ENCODE measurements at regions of chr1 and their contacts with region 1.

Region 1: DNA sequence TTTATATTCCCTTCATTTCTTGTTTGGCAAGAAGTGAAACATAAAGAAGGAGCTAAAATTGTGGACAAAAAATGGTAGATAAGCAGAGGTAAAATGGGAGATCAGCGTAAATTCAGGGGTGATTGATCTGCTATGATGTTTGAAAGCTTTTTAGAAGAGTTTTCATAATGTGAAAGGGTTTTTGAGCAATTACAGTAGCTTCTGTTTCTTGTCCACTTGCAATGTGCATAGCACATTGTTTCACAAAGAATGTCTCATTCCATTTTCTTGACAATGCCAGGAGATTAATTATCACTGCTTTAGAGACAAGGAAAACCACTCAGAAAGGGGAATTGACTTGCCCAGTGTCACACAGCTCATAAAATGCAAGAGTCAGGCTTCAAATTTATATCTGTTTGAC is 65.9 kb upstream of the PLPPR4 start:
- DNase-seq: no peak
- ATAC-seq: no peak

Region 2: GRCh38 chr1:99131546-99131945 is 66.8 kb before region 1 on chr1:
- intact Hi-C with region 1: no loop called
- DNase-seq: no peak
- ATAC-seq: no peak

Region 3: GRCh38 chr1:99264201-99265021 is 66.0 kb after region 1 on chr1 and contains the start of gene PLPPR4:
- intact Hi-C with region 1: loop called (anchors 10 kb)
- DNase-seq: peak; percentile 74
- ATAC-seq: peak; percentile 92
- total RNA-seq, gene PLPPR4: 0.24 TPM

Region 4: DNA sequence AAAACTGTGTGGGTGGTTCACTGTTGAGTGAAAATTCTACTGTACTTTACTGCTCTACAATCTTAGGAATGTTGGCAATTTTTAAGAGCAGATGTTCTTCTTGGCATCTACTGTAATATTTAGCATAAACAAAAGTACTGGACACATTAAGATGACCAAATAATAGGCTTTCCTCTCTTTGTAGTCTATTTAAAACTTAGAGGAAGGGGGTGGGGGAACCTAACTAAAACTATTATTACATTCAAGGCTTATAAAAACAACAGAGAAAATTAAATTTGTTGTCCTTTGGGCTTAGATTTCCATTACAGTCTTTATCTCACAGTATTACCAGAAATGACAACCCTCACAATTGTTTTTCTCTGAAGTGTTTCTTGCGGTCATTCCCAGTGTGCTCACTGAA is 247.1 kb after region 1 on chr1:
- intact Hi-C with region 1: no loop called
- DNase-seq: no peak
- ATAC-seq: no peak

Measured in Right ventricle myocardium inferior (tissue), 1 donor.